IMR-90 (cell line): ENCODE measurements at regions of chr1 and their contacts with region 1.

Region 1: DNA sequence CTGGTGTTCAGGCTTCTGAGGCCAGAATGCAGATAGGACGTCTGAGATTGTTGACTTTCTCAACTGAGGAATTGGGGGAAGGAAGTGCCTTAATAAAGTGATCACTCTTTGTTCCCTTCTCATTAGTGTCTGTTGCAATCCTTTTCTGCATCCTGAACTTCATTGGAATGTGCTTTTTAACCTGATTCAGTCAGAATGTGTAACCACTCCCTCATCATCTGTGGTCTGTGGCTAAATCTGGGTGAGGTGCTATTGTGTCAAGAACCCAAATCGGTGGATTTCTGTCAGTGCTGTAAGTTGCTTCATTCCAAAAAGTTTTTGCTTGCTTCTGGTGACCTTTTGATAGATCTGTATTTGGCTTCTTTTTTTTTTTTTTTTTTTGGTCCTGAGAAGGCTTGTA is 38.2 kb downstream of the ARID1A start:
- DNase-seq: peak; percentile 72
- ATAC-seq: no peak
- H3K4me3 ChIP-seq: no peak overlapping the region
- H3K27ac ChIP-seq: no peak overlapping the region
- H3K4me1 ChIP-seq: peaks cover 24% of the 10 kb centered on the region
- H3K27me3 ChIP-seq: no peaks in the 10 kb centered on the region
- CTCF ChIP-seq: no peak
- POLR2A ChIP-seq: no peak
- RAD21 ChIP-seq: no peak

Region 2: DNA sequence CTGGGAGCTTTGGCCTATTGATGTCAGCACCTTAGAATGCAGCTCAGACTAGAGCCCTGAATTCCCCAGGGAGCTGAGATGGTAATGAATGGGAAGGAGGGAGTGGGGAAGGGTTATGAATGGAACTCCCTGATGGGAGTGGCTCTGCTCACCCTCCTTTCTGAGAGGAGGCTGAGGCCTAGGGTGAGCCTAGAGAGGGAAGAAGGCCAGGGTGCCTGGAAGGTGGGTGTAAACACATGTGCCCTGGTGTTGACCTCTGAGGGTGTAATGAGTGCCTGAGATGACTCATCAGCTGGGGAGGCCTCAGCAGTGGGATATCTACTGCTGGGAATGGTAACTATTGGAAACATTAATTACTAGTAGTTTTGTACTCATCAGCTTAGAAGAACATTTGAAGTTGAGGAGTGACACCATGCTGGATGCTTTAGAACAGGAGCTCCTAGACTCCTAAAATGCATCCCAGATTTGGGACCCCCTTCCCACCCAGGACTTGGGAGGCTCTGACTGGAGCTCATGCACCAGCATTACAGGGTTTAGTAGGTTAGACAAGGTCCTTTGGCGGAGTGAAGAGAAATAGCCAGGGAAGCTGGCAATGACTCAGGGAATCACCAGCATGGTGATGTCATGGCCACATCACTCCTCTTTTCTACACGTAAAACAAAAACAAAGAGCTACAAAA is 37.8 kb after region 1 on chr1:
- CTCF ChIA-PET with region 1: no interaction called
- POLR2A ChIA-PET with region 1: no interaction called
- dilution Hi-C with region 1: no loop called
- in situ Hi-C with region 1: no loop called
- intact Hi-C with region 1: loop called (anchors 5 kb)
- DNase-seq: peak; percentile 99
- ATAC-seq: peak; percentile 83
- H3K4me3 ChIP-seq: no peak overlapping the region
- H3K27ac ChIP-seq: peak overlapping the region; percentile 96
- H3K4me1 ChIP-seq: peaks cover 37% of the 10 kb centered on the region
- H3K27me3 ChIP-seq: no peaks in the 10 kb centered on the region
- CTCF ChIP-seq: no peak
- POLR2A ChIP-seq: peak; percentile 60; the same call in 1 of the 2 replicates
- RAD21 ChIP-seq: peak; percentile 7; the same call in 1 of the 2 replicates